Spleen (tissue), 13 donors: ENCODE measurements at regions of chrX and their contacts with region 1.

Region 1: GRCh38 chrX:20252381-20253231 is 14.1 kb downstream of the RPS6KA3 start:
- DNase-seq: peak; percentile 82
- H3K4me3 ChIP-seq: no peak overlapping the region
- H3K27ac ChIP-seq: peak overlapping the region in 2 of 8 donors; percentile 33 to 41
- H3K4me1 ChIP-seq: peaks cover 0 to 52% (median 8%) of the 10 kb centered on the region in 6 donors
- H3K27me3 ChIP-seq: no peaks in the 10 kb centered on the region
- CTCF ChIP-seq: peak; percentile 39 to 75 (median 63)
- POLR2A ChIP-seq: no peak

Region 2: GRCh38 chrX:19791562-19791961 is 461.0 kb before region 1 on chrX:
- intact Hi-C with region 1: no loop called
- DNase-seq: no peak
- H3K4me3 ChIP-seq: no peak overlapping the region
- H3K27ac ChIP-seq: peak overlapping the region in 2 of 8 donors; percentile 0 to 28
- H3K4me1 ChIP-seq: peaks cover 0 to 64% (median 24%) of the 10 kb centered on the region in 6 donors
- H3K27me3 ChIP-seq: peaks cover 0 to 4% (median 0%) of the 10 kb centered on the region in 7 donors
- CTCF ChIP-seq: no peak
- POLR2A ChIP-seq: no peak

Region 3: GRCh38 chrX:20011608-20012007 is 241.0 kb before region 1 on chrX:
- intact Hi-C with region 1: no loop called
- DNase-seq: no peak
- H3K4me3 ChIP-seq: no peak overlapping the region
- H3K27ac ChIP-seq: no peak overlapping the region
- H3K4me1 ChIP-seq: no peaks in the 10 kb centered on the region
- H3K27me3 ChIP-seq: no peaks in the 10 kb centered on the region
- CTCF ChIP-seq: no peak
- POLR2A ChIP-seq: no peak

Region 4: DNA sequence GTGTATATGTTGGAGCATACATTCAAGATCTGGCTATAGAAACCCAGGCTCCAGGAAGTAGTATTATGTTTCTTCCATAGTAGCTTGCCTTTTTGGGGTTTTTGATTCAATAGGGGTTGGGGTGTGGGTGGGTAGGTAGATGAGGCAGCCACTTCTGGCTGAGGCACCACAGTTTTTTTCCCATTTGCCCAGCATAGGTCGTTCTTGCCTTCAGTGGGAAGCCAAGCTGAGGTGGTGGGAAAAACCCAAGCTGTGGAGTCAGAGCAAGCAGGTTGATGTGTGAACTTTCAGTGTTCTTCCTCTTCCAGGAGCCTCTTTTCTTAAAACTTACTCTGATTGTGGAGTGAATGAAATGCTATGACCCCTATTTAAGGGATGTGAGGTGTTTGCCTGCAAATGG is 81.1 kb after region 1 on chrX:
- intact Hi-C with region 1: no loop called
- DNase-seq: no peak
- H3K4me3 ChIP-seq: no peak overlapping the region
- H3K27ac ChIP-seq: no peak overlapping the region
- H3K4me1 ChIP-seq: no peaks in the 10 kb centered on the region
- H3K27me3 ChIP-seq: peaks cover 0 to 5% (median 0%) of the 10 kb centered on the region in 7 donors
- CTCF ChIP-seq: no peak
- POLR2A ChIP-seq: no peak

Region 5: DNA sequence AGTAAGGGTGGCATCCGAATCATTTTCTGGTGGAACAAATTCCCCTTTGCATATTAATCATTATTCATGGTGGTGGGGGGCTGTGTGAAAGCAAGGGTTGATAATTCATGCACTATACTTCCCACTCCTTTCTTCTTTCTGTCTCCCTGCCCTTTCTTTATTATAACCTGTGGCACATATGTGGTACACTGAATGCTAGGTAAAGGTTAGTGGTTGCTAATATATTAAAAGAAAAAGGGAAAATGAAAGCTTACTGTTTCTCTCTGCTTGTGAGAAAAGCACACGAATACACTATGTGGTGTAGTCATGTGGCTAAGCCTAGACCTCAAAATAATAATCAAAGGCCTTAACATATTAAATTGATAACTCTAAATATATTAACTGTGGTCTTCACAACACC is 192.5 kb after region 1 on chrX:
- intact Hi-C with region 1: loop called (anchors 5 kb)
- DNase-seq: no peak
- H3K4me3 ChIP-seq: no peak overlapping the region
- H3K27ac ChIP-seq: peak overlapping the region in 1 of 8 donors; percentile 13
- H3K4me1 ChIP-seq: peaks cover 0 to 12% (median 0%) of the 10 kb centered on the region in 6 donors
- H3K27me3 ChIP-seq: no peaks in the 10 kb centered on the region
- CTCF ChIP-seq: no peak
- POLR2A ChIP-seq: no peak